ENCODE measurements at regions of chr1 and their contacts with region 1.

Region 1: GRCh38 chr1:45521398-45522323 is at the start of gene PRDX1:
- DNase-seq: peak; percentile 95
- H3K4me3 ChIP-seq: peak within 1 kb of the TSS; percentile 99
- H3K27ac ChIP-seq: peak within 1 kb of the TSS; percentile 90
- H3K4me1 ChIP-seq: peaks cover 43% of the 10 kb centered on the region
- CTCF ChIP-seq: peak; percentile 30; the same call in 1 of the 2 replicates
- total RNA-seq, gene PRDX1: 725 and 814 TPM in 2 replicates

Region 2: DNA sequence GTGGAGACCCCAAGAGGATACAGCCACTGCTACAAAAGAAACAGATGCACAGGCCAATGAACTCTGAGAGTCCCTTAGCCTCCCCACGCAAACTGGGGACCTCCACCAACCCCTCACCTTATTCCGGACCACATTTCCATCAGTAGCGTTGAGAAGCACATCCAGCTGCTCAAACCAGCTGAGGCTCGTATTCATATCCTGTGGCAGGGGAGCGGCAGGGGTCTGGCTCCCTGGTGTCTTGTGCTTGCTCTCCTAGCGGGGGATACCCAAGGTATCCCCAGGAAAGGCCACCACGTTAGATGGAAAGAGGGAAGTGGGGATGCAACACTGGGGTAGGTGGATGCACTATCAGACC is 22.3 kb before region 1 on chr1:
- CTCF ChIA-PET with region 1: no interaction called
- POLR2A ChIA-PET with region 1: interaction called, 8 read pairs
- intact Hi-C with region 1: loop called (anchors 2 kb)
- DNase-seq: peak; percentile 59
- H3K4me3 ChIP-seq: peak overlapping the region; percentile 86
- H3K27ac ChIP-seq: peak overlapping the region; percentile 54
- H3K4me1 ChIP-seq: peaks cover 21% of the 10 kb centered on the region
- CTCF ChIP-seq: no peak

Region 3: DNA sequence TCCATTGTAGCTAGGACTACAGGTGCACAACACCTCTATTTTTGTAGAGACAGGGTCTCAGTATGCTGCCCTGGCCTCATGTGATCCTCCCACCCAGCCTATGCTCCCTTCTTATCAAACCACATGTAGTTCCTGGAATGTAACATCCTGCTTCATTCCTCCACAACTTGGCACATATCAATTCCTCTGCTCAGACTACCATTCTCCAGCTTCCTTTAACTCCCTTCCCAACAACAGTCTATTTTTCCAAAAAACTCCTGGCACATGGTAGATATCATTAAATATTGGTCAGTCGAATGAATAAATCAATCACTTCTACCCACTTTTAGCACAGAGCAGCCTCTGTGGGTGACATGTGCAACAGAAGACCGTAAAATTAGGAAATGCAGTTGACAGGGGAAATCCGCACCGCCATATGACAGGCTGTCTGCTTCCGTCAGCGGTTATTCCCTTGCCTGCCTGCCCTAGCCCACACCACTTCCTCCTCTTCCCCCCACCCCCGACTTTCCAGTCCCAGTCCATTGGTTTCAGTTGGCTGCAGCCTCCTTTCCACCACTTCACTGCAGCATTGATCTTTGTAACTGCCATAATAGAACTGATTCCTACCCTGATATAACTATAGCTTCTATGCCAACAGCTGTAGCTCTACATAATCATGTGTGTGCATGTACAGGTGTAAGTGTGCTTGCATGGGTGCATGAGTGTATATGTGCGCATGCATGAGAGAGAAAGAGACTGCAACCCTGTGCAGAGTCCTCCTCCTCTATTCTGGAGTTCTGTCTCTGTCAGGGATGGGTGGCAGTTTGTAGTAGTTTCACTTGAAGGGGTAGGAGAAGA is 22.1 kb after region 1 on chr1:
- CTCF ChIA-PET with region 1: no interaction called
- POLR2A ChIA-PET with region 1: interaction called, 41 read pairs
- intact Hi-C with region 1: no loop called
- DNase-seq: peak; percentile 46
- H3K4me3 ChIP-seq: peak overlapping the region; percentile 12
- H3K27ac ChIP-seq: peak overlapping the region; percentile 51
- H3K4me1 ChIP-seq: peaks cover 25% of the 10 kb centered on the region
- CTCF ChIP-seq: no peak

Region 4: GRCh38 chr1:45550401-45551351 is 29.0 kb after region 1 on chr1 and contains the start of gene AKR1A1:
- CTCF ChIA-PET with region 1: no interaction called
- POLR2A ChIA-PET with region 1: interaction called, 41 read pairs
- intact Hi-C with region 1: loop called (anchors 2 kb)
- DNase-seq: peak; percentile 94
- H3K4me3 ChIP-seq: peak within 1 kb of the TSS; percentile 86
- H3K27ac ChIP-seq: peak within 1 kb of the TSS; percentile 46
- H3K4me1 ChIP-seq: peaks cover 21% of the 10 kb centered on the region
- CTCF ChIP-seq: no peak
- total RNA-seq, gene AKR1A1: 110 and 142 TPM in 2 replicates

Region 5: DNA sequence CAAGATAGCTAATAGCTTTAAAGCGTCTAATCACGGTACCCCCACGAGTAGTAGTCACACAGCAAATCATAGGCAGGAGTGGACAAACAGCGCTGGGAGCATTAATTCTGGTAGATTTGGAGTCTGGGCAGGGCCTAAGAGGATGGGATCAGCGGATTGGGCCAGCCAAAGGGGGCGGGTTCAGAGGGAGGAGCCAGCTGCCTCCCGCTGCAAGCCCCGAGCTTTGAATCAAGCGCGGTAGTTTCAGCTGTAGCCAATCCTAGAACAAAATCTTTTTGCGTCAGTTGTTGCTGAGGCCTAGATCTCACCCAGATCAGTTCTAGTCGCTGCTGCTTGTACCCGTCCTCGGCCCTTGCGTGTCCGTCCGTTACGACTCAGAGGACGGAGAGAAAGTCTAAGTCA is 61.6 kb after region 1 on chr1:
- CTCF ChIA-PET with region 1: no interaction called
- POLR2A ChIA-PET with region 1: interaction called, 9 read pairs
- intact Hi-C with region 1: loop called (anchors 1 kb)
- DNase-seq: peak; percentile 98
- H3K4me3 ChIP-seq: peak overlapping the region; percentile 99
- H3K27ac ChIP-seq: peak overlapping the region; percentile 83
- H3K4me1 ChIP-seq: peaks cover 54% of the 10 kb centered on the region
- CTCF ChIP-seq: no peak